ENCODE measurements at regions of chr19 and their contacts with region 1.

Region 1: GRCh38 chr19:17996826-17997316 is 11.1 kb upstream of the ARRDC2 start:
- DNase-seq: peak; percentile 83 to 93 (median 84)
- ATAC-seq: peak; percentile 81 to 86 (median 82)
- H3K4me3 ChIP-seq: no peak overlapping the region
- H3K27ac ChIP-seq: no peak overlapping the region
- H3K4me1 ChIP-seq: peaks cover 0 to 14% (median 5%) of the 10 kb centered on the region in 12 donors
- H3K27me3 ChIP-seq: peaks cover 0 to 21% (median 0%) of the 10 kb centered on the region in 9 donors
- CTCF ChIP-seq: peak; percentile 94 to 99 (median 98)
- POLR2A ChIP-seq: no peak

Region 2: DNA sequence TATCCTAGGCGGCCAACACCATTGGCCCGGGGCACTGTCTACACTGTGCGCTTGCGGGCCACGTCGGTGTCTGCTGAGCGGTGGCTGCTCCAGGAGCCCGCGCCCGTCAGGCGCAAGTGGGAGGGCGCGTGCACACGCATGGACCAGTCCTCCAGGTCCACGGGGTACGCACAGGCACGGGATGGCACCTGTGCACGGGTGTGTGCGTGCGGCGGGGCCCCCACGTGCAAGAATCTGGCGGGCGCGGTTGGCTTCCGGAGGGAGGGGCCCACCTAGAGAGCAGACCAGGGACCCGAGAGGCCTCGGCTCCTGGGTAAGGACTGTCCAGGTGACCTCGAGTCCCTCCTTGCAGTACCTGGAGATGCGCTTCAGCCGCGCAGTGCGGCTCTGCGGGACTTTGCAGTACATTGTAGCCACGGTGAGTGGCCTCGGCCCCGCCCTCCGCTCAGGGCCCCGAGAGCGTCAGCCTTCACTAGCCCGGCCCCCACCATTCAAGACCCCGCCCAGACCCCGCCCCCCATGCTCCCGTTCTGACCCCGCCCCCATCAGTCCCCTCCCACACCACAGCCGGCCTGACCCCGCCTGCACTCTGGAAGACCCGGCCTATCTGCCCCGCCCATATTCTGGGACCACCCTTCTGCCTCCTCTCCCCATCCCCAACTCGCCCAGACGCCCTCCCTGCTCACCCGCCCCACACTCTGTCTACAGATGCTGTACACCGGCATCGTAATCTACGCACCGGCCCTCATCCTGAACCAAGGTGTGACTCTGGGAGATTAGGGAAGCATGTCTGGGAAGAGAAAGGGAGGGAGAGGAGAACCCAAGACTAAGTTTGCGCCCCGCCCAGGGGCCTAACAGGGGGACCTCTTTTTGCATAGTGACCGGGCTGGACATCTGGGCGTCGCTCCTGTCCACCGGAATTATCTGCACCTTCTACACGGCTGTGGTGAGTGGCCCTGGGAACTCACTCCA is 122.8 kb before region 1 on chr19:
- intact Hi-C with region 1: loop called in 1 of 10 experiments (anchors 5 kb)
- DNase-seq: no peak
- ATAC-seq: peak in 1 of 4 donors; percentile 62
- H3K4me3 ChIP-seq: peak overlapping the region in 1 of 12 donors; percentile 45
- H3K27ac ChIP-seq: no peak overlapping the region
- H3K4me1 ChIP-seq: peaks cover 0 to 27% (median 6%) of the 10 kb centered on the region in 12 donors
- H3K27me3 ChIP-seq: peaks cover 38 to 75% (median 54%) of the 10 kb centered on the region in 9 donors
- CTCF ChIP-seq: no peak
- POLR2A ChIP-seq: no peak

Region 3: GRCh38 chr19:17938092-17938845 is 58.6 kb before region 1 on chr19:
- intact Hi-C with region 1: loop called (anchors 1 to 2 kb)
- DNase-seq: peak; percentile 63 to 86 (median 75)
- ATAC-seq: peak; percentile 73 to 91 (median 86)
- H3K4me3 ChIP-seq: no peak overlapping the region
- H3K27ac ChIP-seq: no peak overlapping the region
- H3K4me1 ChIP-seq: peaks cover 0 to 11% (median 8%) of the 10 kb centered on the region in 12 donors
- H3K27me3 ChIP-seq: no peaks in the 10 kb centered on the region
- CTCF ChIP-seq: peak; percentile 85 to 97 (median 90)
- POLR2A ChIP-seq: no peak

Region 4: GRCh38 chr19:17947815-17948513 is 48.9 kb before region 1 on chr19:
- intact Hi-C with region 1: loop called in 4 of 10 experiments (anchors 2 to 5 kb)
- DNase-seq: peak; percentile 93 to 96 (median 94)
- ATAC-seq: peak; percentile 65 to 92 (median 90)
- H3K4me3 ChIP-seq: peak overlapping the region; percentile 65 to 94 (median 81)
- H3K27ac ChIP-seq: peak overlapping the region in 7 of 12 donors; percentile 47 to 80 (median 56)
- H3K4me1 ChIP-seq: peaks cover 6 to 55% (median 38%) of the 10 kb centered on the region in 12 donors
- H3K27me3 ChIP-seq: peaks cover 26 to 51% (median 35%) of the 10 kb centered on the region in 9 donors
- CTCF ChIP-seq: no peak
- POLR2A ChIP-seq: no peak

Region 5: GRCh38 chr19:18074190-18074589 is 77.3 kb after region 1 on chr19:
- intact Hi-C with region 1: no loop called
- DNase-seq: no peak
- ATAC-seq: no peak
- H3K4me3 ChIP-seq: no peak overlapping the region
- H3K27ac ChIP-seq: no peak overlapping the region
- H3K4me1 ChIP-seq: no peaks in the 10 kb centered on the region
- H3K27me3 ChIP-seq: peaks cover 0 to 12% (median 0%) of the 10 kb centered on the region in 9 donors
- CTCF ChIP-seq: no peak
- POLR2A ChIP-seq: no peak

Region 6: GRCh38 chr19:18131841-18132596 is 135.1 kb after region 1 on chr19:
- intact Hi-C with region 1: no loop called
- DNase-seq: no peak
- ATAC-seq: no peak
- H3K4me3 ChIP-seq: no peak overlapping the region
- H3K27ac ChIP-seq: no peak overlapping the region
- H3K4me1 ChIP-seq: peaks cover 0 to 7% (median 0%) of the 10 kb centered on the region in 12 donors
- H3K27me3 ChIP-seq: no peaks in the 10 kb centered on the region
- CTCF ChIP-seq: no peak
- POLR2A ChIP-seq: no peak

Region 7: GRCh38 chr19:18281082-18282020 is 284.5 kb after region 1 on chr19 and contains the start of gene JUND:
- intact Hi-C with region 1: no loop called
- DNase-seq: peak; percentile 99
- ATAC-seq: peak; percentile 68 to 88 (median 79)
- H3K4me3 ChIP-seq: peak within 1 kb of the TSS; percentile 63 to 100 (median 92)
- H3K27ac ChIP-seq: peak within 1 kb of the TSS; percentile 99 to 100 (median 100)
- H3K4me1 ChIP-seq: peaks cover 10 to 52% (median 38%) of the 10 kb centered on the region in 12 donors
- H3K27me3 ChIP-seq: no peaks in the 10 kb centered on the region
- CTCF ChIP-seq: peak in 2 of 12 donors; percentile 21 to 22
- POLR2A ChIP-seq: peak; percentile 90 to 98
- total RNA-seq, gene JUND: 80.2 to 352 (median 137) TPM

Measured in heart left ventricle (tissue), 16 donors.